Activated CD4-positive, alpha-beta memory T cell treated with anti-CD3 and anti-CD28 coated beads for 36 hours (primary cell): ENCODE measurements at regions of chr13 and their contacts with region 1.

Region 1: GRCh38 chr13:99895223-99895994 is 76.2 kb downstream of the ZIC5 start:
- DNase-seq: no peak
- H3K4me3 Mint-ChIP-seq: peak overlapping the region; percentile 59
- H3K27ac Mint-ChIP-seq: no peak overlapping the region
- H3K4me1 Mint-ChIP-seq: peaks cover 9% of the 10 kb centered on the region
- H3K27me3 Mint-ChIP-seq: peaks cover 39% of the 10 kb centered on the region

Region 2: DNA sequence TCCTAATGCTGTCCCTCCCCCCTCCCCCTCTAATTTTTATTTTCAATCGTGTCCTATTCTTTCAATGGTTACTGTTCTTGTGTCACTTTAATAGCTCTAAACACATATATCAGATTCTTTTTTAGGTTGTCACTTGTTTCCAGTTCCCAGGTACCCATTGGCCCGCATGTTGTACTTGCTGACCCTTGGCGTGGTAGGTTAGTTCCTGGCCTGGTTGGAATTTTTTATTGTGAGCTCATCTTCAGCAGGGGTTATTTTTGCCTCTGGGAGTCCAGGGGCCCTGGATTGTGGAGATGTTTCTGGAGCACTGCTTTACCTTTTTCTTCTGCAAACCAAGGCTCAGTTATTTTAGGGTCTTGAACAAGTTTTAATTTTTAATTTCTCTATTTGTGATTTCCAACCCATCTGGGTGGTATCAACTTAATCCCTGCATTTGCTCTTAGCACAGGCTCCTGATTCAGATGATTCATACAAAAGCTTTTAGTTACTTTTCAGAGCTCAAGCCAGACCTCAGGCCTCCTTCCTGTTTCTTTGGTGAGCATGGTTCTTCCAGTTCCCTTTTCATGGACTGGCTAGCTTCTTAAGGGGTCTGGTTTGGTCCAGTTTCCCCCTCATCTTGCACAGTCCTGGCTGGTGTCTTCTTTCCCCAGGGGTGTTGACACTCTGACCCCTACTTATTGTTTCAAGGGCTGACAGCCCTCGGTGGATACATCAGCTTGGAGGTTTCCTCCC is 173.6 kb before region 1 on chr13:
- CTCF ChIA-PET with region 1: no interaction called
- POLR2A ChIA-PET with region 1: no interaction called
- intact Hi-C with region 1: no loop called
- DNase-seq: no peak
- H3K4me3 Mint-ChIP-seq: no peak overlapping the region
- H3K27ac Mint-ChIP-seq: no peak overlapping the region
- H3K4me1 Mint-ChIP-seq: no peaks in the 10 kb centered on the region
- H3K27me3 Mint-ChIP-seq: no peaks in the 10 kb centered on the region

Region 3: DNA sequence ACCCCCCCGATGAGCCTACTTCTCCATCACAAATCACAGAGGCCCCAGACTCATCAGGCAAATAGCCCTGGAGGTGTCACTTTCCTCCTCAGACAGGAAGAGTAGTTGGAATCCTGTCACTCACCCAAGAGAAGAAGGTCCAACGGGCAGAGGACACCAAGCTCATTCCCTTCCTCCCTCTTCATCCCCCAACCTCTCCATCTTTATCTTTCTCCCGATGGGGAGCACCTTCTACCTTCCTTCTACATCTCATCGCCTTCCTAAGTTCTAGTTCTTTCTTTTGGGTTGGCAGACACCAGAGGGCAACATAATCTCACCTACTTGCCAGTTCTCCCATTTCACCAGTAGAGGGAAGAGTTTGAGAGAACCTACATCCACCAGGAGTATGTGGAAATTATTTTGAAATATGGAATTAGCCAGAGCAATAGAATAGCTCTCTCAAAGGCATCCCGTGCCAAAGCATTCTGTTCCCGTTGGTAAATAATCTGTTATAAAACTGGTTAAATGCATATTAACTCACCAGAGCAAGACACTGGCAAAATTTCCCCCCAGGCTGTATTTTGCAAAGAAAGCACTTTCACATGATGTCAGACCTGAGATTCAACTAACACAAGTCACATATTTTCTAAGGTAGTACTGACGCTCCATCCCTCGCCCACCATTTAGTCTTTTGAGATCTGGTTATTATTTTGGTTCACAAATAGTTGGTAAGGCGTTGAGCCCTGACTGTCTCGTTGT is 21.1 kb after region 1 on chr13:
- CTCF ChIA-PET with region 1: interaction called, 20 read pairs
- POLR2A ChIA-PET with region 1: no interaction called
- intact Hi-C with region 1: no loop called
- DNase-seq: no peak
- H3K4me3 Mint-ChIP-seq: no peak overlapping the region
- H3K27ac Mint-ChIP-seq: no peak overlapping the region
- H3K4me1 Mint-ChIP-seq: peaks cover 19% of the 10 kb centered on the region
- H3K27me3 Mint-ChIP-seq: peaks cover 5% of the 10 kb centered on the region